ENCODE measurements at regions of chr11 and their contacts with region 1.

Region 1: DNA sequence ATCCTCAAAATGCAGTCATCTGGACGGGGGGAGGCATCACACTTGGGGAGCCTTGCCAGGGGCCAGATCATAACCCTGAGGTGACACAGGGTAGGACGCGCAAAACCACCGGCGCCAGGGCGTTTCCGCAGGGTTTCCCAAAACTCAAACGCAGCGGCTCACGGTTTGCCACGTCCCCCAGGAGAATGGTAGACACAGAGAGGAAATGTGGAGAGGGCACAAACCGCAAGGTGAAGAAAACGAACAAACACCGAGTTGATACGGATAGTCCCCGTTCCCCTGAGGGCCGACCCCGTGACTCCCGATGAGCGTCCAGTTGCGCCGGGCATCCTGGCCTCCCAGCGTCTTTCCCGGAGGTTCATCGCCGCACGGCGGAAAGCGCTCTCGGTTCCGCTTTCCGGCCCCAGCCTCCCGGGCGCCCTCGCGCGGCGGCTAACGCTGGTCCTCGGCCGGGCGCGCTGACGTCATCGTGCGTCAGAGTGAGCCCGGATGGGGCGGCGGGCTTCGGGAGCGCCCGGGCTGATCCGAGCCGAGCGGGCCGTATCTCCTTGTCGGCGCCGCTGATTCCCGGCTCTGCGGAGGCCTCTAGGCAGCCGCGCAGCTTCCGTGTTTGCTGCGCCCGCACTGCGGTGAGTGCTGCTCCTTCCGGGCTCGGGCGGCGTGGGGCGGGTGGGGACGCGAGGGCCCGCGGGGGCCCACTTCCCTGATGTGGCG is at the start of gene BIRC2:
- DNase-seq: peak; percentile 96 to 100
- H3K4me3 ChIP-seq: peak within 1 kb of the TSS; percentile 52
- H3K4me3 Mint-ChIP-seq: peak within 1 kb of the TSS; percentile 93
- H3K27ac Mint-ChIP-seq: peak within 1 kb of the TSS; percentile 68
- H3K4me1 ChIP-seq: peaks cover 17% of the 10 kb centered on the region
- H3K4me1 Mint-ChIP-seq: peaks cover 8% of the 10 kb centered on the region
- H3K27me3 ChIP-seq: no peaks in the 10 kb centered on the region
- H3K27me3 Mint-ChIP-seq: no peaks in the 10 kb centered on the region
- CTCF ChIP-seq: peak; percentile 71 to 97
- total RNA-seq, gene BIRC2: 52.7 and 53.5 TPM in 2 replicates

Region 2: DNA sequence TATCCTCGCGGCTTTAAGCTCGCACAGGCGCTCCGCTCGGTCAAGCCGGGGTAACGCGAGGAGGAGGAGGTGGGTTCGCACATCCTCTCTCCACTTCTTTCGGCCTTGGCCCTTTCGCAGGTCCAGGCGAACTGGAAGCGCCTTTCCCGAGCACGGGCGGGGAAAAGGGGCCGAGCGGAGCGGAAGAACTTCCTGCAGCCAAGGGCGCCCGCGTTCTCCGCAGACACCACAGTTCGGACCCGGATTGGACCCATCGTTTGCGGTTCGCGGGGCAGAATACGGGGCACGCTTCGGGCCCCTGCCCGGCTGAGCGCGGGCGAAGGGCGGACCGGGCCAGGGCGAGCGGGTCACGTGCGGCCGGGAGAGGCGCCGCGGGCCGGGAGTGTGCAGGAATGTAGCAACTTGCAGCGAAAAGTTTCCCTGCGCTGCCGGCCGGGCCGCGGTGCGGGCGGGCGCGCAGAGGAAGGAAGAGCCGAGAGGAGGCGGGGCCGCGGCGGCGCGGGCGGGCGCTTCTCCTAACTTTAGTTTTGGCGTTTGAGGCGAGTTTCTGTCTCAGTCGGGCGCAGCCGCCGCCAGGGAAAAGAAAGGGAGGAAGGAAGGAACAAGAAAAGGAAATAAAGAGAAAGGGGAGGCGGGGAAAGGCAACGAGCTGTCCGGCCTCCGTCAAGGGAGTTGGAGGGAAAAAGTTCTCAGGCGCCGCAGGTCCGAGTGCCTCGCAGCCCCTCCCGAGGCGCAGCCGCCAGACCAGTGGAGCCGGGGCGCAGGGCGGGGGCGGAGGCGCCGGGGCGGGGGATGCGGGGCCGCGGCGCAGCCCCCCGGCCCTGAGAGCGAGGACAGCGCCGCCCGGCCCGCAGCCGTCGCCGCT is 236.8 kb before region 1 on chr11 and contains the start of gene YAP1:
- CTCF ChIA-PET with region 1: no interaction called
- POLR2A ChIA-PET with region 1: no interaction called
- intact Hi-C with region 1: loop called (anchors 2 kb)
- DNase-seq: peak; percentile 97 to 99
- H3K4me3 ChIP-seq: peak within 1 kb of the TSS; percentile 96
- H3K4me3 Mint-ChIP-seq: peak within 1 kb of the TSS; percentile 91
- H3K27ac Mint-ChIP-seq: peak within 1 kb of the TSS; percentile 98
- H3K4me1 ChIP-seq: peaks cover 20% of the 10 kb centered on the region
- H3K4me1 Mint-ChIP-seq: peaks cover 16% of the 10 kb centered on the region
- H3K27me3 ChIP-seq: no peaks in the 10 kb centered on the region
- H3K27me3 Mint-ChIP-seq: no peaks in the 10 kb centered on the region
- CTCF ChIP-seq: no peak
- total RNA-seq, gene YAP1: 207 and 227 TPM in 2 replicates

Region 3: DNA sequence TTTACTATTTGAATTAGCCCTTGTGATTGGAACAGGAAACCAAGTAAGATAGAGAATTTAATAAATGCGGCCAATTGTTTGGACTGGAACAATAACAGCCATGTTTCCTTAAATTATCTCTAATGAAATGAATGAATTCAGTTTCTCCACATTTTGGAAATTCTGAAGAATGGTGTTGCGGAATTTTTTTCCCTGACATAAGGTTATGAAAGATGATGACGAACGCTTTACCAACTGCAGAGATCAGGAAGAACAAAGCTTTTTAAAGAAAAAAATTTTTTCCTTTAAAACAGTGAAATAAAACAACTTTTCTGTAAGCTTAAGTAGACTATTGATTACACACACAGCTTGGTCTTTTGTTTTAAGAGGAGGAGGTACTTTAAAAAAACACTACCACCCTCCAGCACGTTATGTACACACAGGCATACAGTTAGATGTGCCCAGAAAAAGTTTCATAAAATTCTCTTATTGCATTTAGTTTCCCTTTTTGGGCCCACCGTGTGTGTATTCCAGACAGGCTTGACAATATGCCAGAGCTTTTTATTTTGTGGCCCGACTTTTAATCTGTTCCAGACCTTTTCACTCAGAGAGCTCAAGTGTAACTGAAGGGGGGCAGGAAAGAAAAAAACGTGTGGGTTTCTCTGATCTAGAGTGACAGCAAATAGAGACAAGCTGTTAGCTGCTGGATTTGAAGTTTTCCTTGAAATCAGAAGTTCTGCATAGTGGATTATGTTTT is 159.3 kb before region 1 on chr11:
- CTCF ChIA-PET with region 1: no interaction called
- POLR2A ChIA-PET with region 1: no interaction called
- intact Hi-C with region 1: no loop called
- DNase-seq: no peak
- H3K4me3 ChIP-seq: no peak overlapping the region
- H3K4me3 Mint-ChIP-seq: peak overlapping the region; percentile 64
- H3K27ac Mint-ChIP-seq: peak overlapping the region; percentile 54
- H3K4me1 ChIP-seq: peaks cover 83% of the 10 kb centered on the region
- H3K4me1 Mint-ChIP-seq: peaks cover 58% of the 10 kb centered on the region
- H3K27me3 ChIP-seq: no peaks in the 10 kb centered on the region
- H3K27me3 Mint-ChIP-seq: no peaks in the 10 kb centered on the region
- CTCF ChIP-seq: no peak

Region 4: GRCh38 chr11:102317099-102317767 is 29.7 kb before region 1 on chr11 and contains the start of gene BIRC3:
- CTCF ChIA-PET with region 1: interaction called, 3 read pairs
- POLR2A ChIA-PET with region 1: no interaction called
- intact Hi-C with region 1: loop called (anchors 1 kb)
- DNase-seq: peak; percentile 92 to 94
- H3K4me3 ChIP-seq: peak within 1 kb of the TSS; percentile 58
- H3K4me3 Mint-ChIP-seq: peak within 1 kb of the TSS; percentile 89
- H3K27ac Mint-ChIP-seq: peak within 1 kb of the TSS; percentile 80
- H3K4me1 ChIP-seq: peaks cover 12% of the 10 kb centered on the region
- H3K4me1 Mint-ChIP-seq: peaks cover 19% of the 10 kb centered on the region
- H3K27me3 ChIP-seq: no peaks in the 10 kb centered on the region
- H3K27me3 Mint-ChIP-seq: no peaks in the 10 kb centered on the region
- CTCF ChIP-seq: peak; percentile 55 to 59
- total RNA-seq, gene BIRC3: 1.4 and 2.2 TPM in 2 replicates

Region 5: GRCh38 chr11:102599642-102600261 is 252.8 kb after region 1 on chr11:
- CTCF ChIA-PET with region 1: no interaction called
- POLR2A ChIA-PET with region 1: interaction called, 9 read pairs
- intact Hi-C with region 1: loop called (anchors 5 kb)
- DNase-seq: peak; percentile 72 to 81
- H3K4me3 ChIP-seq: no peak overlapping the region
- H3K4me3 Mint-ChIP-seq: peak overlapping the region; percentile 61
- H3K27ac Mint-ChIP-seq: peak overlapping the region; percentile 79
- H3K4me1 ChIP-seq: peaks cover 73% of the 10 kb centered on the region
- H3K4me1 Mint-ChIP-seq: peaks cover 63% of the 10 kb centered on the region
- H3K27me3 ChIP-seq: no peaks in the 10 kb centered on the region
- H3K27me3 Mint-ChIP-seq: no peaks in the 10 kb centered on the region
- CTCF ChIP-seq: no peak